Mammary epithelial cell (primary cell): ENCODE measurements at regions of chr11 and their contacts with region 1.

Region 1: DNA sequence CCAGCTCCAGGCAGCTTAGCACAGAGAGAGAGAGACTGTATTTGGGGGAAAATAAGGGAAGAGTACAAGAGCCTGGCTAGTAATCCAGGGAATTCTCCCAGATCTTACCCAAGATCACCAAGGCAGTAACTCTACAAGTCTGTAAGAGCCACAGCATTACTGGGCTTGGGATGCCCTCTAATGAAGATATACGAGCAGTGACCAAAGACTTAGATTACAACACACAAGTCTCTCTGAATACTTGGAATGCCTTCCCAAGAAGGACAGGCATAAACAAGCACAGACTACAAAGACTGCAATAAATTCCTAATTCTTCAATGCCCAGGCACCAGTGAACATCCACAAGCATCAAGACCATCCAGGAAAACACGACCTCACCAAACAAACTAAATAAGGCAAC is 17.7 kb downstream of the DNAJC24 start:
- DNase-seq: peak; percentile 37
- H3K4me3 ChIP-seq: no peak overlapping the region
- H3K27ac ChIP-seq: no peak overlapping the region
- H3K4me1 ChIP-seq: no peaks in the 10 kb centered on the region
- H3K27me3 ChIP-seq: no peaks in the 10 kb centered on the region
- CTCF ChIP-seq: peak in 1 of 2 donors; percentile 52

Region 2: GRCh38 chr11:31340903-31341572 is 46.3 kb before region 1 on chr11:
- CTCF ChIA-PET with region 1: no interaction called
- dilution Hi-C with region 1: no loop called
- in situ Hi-C with region 1: no loop called
- intact Hi-C with region 1: loop called (anchors 2 kb)
- DNase-seq: peak; percentile 18
- H3K4me3 ChIP-seq: no peak overlapping the region
- H3K27ac ChIP-seq: no peak overlapping the region
- H3K4me1 ChIP-seq: no peaks in the 10 kb centered on the region
- H3K27me3 ChIP-seq: peaks cover 3% of the 10 kb centered on the region
- CTCF ChIP-seq: peak; percentile 65 to 76

Region 3: DNA sequence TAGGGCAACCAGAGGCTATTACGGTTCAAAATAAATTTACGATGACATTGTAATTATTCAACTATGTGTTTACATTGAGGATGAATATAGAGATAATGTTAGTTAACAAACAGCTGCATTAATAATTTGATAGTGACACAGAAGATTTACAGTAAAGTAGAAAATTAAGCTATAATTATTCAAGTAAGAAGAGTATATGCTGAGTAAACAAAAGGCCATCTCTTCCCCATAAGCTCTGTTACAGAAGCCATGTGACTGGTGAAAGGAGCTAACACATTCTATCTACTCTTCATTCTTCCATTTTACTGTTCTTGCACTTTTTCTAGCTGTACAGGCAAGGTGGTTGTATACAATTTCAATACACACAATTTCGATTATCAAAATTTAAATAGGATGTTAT is 67.8 kb after region 1 on chr11:
- CTCF ChIA-PET with region 1: no interaction called
- dilution Hi-C with region 1: no loop called
- in situ Hi-C with region 1: no loop called
- intact Hi-C with region 1: no loop called
- DNase-seq: no peak
- H3K4me3 ChIP-seq: no peak overlapping the region
- H3K27ac ChIP-seq: no peak overlapping the region
- H3K4me1 ChIP-seq: no peaks in the 10 kb centered on the region
- H3K27me3 ChIP-seq: no peaks in the 10 kb centered on the region
- CTCF ChIP-seq: no peak